CD8-positive, alpha-beta T cell (primary cell): ENCODE measurements at regions of chr13 and their contacts with region 1.

Region 1: DNA sequence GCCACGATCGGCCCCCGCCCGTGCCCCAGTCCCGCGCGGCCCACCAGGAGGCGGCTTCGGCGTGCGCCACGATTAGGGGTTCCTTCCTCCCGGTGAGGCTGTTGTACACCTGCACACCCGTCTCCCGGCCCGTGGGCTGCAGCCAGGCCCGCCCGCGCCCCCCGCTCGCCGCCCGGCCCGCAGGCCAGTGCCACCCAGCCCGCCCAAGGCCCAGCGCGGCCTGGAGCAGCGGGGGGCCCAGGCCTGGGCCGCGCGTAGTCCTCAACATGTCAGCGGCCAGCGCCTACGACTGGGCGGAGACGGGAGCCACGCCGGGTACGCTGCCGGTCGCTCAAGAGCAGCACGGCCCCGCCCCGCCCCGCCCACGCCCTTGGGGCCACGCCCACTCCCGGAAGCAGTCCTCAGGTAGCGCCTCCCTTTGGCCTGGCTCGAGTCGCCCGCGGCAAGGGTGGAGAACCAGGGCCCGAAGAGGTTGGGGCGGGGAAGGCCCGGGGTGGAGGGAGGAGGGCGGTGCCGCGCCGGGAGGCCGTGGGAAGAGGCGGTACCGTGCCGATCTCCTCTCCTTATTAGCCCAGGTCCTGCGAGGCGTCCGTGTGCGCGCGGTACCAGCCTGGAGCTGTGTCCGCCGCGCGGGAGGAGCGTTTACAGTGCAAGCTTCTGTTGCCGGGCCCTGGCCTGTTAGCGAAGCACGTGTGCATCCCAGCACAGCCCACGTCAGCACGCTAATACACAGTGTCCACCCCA is at the start of gene CARS2:
- DNase-seq: peak; percentile 86 to 97 (median 89)
- ATAC-seq: peak; percentile 90
- H3K4me3 ChIP-seq: peak within 1 kb of the TSS; percentile 64 to 76
- H3K4me3 Mint-ChIP-seq: peak within 1 kb of the TSS; percentile 95
- H3K27ac ChIP-seq: peak within 1 kb of the TSS; percentile 65 to 69
- H3K27ac Mint-ChIP-seq: peak within 1 kb of the TSS; percentile 88
- H3K4me1 ChIP-seq: peaks cover 41% of the 10 kb centered on the region
- H3K4me1 Mint-ChIP-seq: peaks cover 42% of the 10 kb centered on the region
- H3K27me3 ChIP-seq: no peaks in the 10 kb centered on the region
- H3K27me3 Mint-ChIP-seq: no peaks in the 10 kb centered on the region
- CTCF ChIP-seq: peak; percentile 32
- total RNA-seq, gene CARS2: 48.2 to 48.8 TPM

Region 2: GRCh38 chr13:110561344-110562035 is 144.5 kb before region 1 on chr13 and contains the start of gene RAB20:
- CTCF ChIA-PET with region 1: no interaction called
- POLR2A ChIA-PET with region 1: no interaction called
- intact Hi-C with region 1: loop called in 1 of 2 experiments (anchors 2 kb)
- DNase-seq: peak in 8 of 9 experiments; percentile 28 to 69 (median 54)
- ATAC-seq: peak; percentile 69
- H3K4me3 ChIP-seq: peak within 1 kb of the TSS; percentile 81 to 94
- H3K4me3 Mint-ChIP-seq: peak within 1 kb of the TSS; percentile 99
- H3K27ac ChIP-seq: peak within 1 kb of the TSS; percentile 37 to 52
- H3K27ac Mint-ChIP-seq: peak within 1 kb of the TSS; percentile 90
- H3K4me1 ChIP-seq: peaks cover 20% of the 10 kb centered on the region
- H3K4me1 Mint-ChIP-seq: peaks cover 15% of the 10 kb centered on the region
- H3K27me3 ChIP-seq: peaks cover 0 to 2% of the 10 kb centered on the region in 2 experiments
- H3K27me3 Mint-ChIP-seq: peaks cover 4% of the 10 kb centered on the region
- CTCF ChIP-seq: no peak
- total RNA-seq, gene RAB20: 1.2 to 1.3 TPM

Region 3: GRCh38 chr13:110615322-110616102 is 90.5 kb before region 1 on chr13 and contains the start of gene NAXD:
- CTCF ChIA-PET with region 1: interaction called, 3 read pairs
- POLR2A ChIA-PET with region 1: no interaction called
- intact Hi-C with region 1: loop called in 1 of 2 experiments (anchors 2 kb)
- DNase-seq: peak; percentile 44 to 89 (median 72)
- ATAC-seq: peak; percentile 81
- H3K4me3 ChIP-seq: peak within 1 kb of the TSS; percentile 85 to 90
- H3K4me3 Mint-ChIP-seq: peak within 1 kb of the TSS; percentile 93
- H3K27ac ChIP-seq: peak within 1 kb of the TSS; percentile 53 to 59
- H3K27ac Mint-ChIP-seq: peak within 1 kb of the TSS; percentile 95
- H3K4me1 ChIP-seq: peaks cover 23% of the 10 kb centered on the region
- H3K4me1 Mint-ChIP-seq: peaks cover 34% of the 10 kb centered on the region
- H3K27me3 ChIP-seq: no peaks in the 10 kb centered on the region
- H3K27me3 Mint-ChIP-seq: no peaks in the 10 kb centered on the region
- CTCF ChIP-seq: no peak
- total RNA-seq, gene NAXD: 23.4 to 25.6 TPM

Region 4: GRCh38 chr13:110680851-110681250 is 25.1 kb before region 1 on chr13:
- CTCF ChIA-PET with region 1: no interaction called
- POLR2A ChIA-PET with region 1: no interaction called
- intact Hi-C with region 1: no loop called
- DNase-seq: peak in 3 of 9 experiments; percentile 16 to 45 (median 21)
- ATAC-seq: peak; percentile 35
- H3K4me3 ChIP-seq: no peak overlapping the region
- H3K4me3 Mint-ChIP-seq: no peak overlapping the region
- H3K27ac ChIP-seq: no peak overlapping the region
- H3K27ac Mint-ChIP-seq: no peak overlapping the region
- H3K4me1 ChIP-seq: no peaks in the 10 kb centered on the region
- H3K4me1 Mint-ChIP-seq: peaks cover 8% of the 10 kb centered on the region
- H3K27me3 ChIP-seq: no peaks in the 10 kb centered on the region
- H3K27me3 Mint-ChIP-seq: no peaks in the 10 kb centered on the region
- CTCF ChIP-seq: no peak

Region 5: GRCh38 chr13:111153279-111153976 is 447.4 kb after region 1 on chr13:
- CTCF ChIA-PET with region 1: no interaction called
- POLR2A ChIA-PET with region 1: no interaction called
- intact Hi-C with region 1: loop called in 1 of 2 experiments (anchors 10 kb)
- DNase-seq: peak; percentile 86 to 96 (median 94)
- ATAC-seq: peak; percentile 81
- H3K4me3 ChIP-seq: peak overlapping the region; percentile 67 to 96
- H3K4me3 Mint-ChIP-seq: peak overlapping the region; percentile 96
- H3K27ac ChIP-seq: peak overlapping the region; percentile 75 to 79
- H3K27ac Mint-ChIP-seq: peak overlapping the region; percentile 96
- H3K4me1 ChIP-seq: peaks cover 20% of the 10 kb centered on the region
- H3K4me1 Mint-ChIP-seq: peaks cover 34% of the 10 kb centered on the region
- H3K27me3 ChIP-seq: no peaks in the 10 kb centered on the region
- H3K27me3 Mint-ChIP-seq: no peaks in the 10 kb centered on the region
- CTCF ChIP-seq: no peak